CD8-positive, alpha-beta T cell (primary cell): ENCODE measurements at regions of chr12 and their contacts with region 1.

Region 1: DNA sequence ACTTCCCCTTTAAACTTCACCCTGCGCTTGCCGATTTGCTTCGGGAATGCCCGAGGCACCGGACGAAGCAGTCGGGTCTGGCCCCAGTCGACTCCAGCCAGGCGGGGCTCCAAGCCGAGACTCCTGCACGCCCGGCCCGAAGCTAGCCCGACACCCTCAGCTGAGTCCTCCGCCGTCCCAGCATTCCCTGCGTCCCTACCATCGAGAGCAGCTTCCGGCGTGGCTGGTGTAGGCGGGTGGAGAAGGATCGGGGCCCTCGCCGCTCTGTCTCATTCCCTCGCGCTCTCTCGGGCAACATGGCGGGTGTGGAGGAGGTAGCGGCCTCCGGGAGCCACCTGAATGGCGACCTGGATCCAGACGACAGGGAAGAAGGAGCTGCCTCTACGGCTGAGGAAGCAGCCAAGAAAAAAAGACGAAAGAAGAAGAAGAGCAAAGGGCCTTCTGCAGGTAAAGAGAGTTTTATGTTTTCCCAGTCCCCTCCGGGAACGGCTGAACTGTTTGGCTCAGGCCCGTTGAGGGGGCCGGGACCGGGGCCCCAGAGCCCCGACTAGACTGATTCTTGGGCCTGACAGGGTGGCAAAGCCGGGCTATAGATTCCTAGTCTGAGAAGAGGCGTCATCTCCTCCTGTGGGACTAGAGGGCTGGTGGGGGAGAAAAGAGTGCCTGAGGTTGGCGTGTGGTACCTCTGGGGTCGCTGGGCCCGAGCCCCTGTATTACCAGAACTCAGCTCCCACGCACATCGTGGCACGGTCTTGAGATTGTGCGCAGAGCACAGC is at the start of gene METAP2:
- DNase-seq: peak; percentile 73 to 94 (median 91)
- ATAC-seq: peak; percentile 97
- H3K4me3 ChIP-seq: peak within 1 kb of the TSS; percentile 77 to 88
- H3K4me3 Mint-ChIP-seq: peak within 1 kb of the TSS; percentile 99
- H3K27ac ChIP-seq: peak within 1 kb of the TSS; percentile 78 to 84
- H3K27ac Mint-ChIP-seq: peak within 1 kb of the TSS; percentile 98
- H3K4me1 ChIP-seq: peaks cover 29% of the 10 kb centered on the region
- H3K4me1 Mint-ChIP-seq: peaks cover 54% of the 10 kb centered on the region
- H3K27me3 ChIP-seq: no peaks in the 10 kb centered on the region
- H3K27me3 Mint-ChIP-seq: no peaks in the 10 kb centered on the region
- CTCF ChIP-seq: no peak
- total RNA-seq, gene METAP2: 68.3 to 69.9 TPM

Region 2: GRCh38 chr12:95072900-95073697 is 401.0 kb before region 1 on chr12 and contains the start of gene NR2C1:
- CTCF ChIA-PET with region 1: no interaction called
- POLR2A ChIA-PET with region 1: no interaction called
- intact Hi-C with region 1: loop called (anchors 1 to 2 kb)
- DNase-seq: peak; percentile 83 to 97 (median 91)
- ATAC-seq: peak; percentile 98
- H3K4me3 ChIP-seq: peak within 1 kb of the TSS; percentile 86 to 96
- H3K4me3 Mint-ChIP-seq: peak within 1 kb of the TSS; percentile 97
- H3K27ac ChIP-seq: peak within 1 kb of the TSS; percentile 71 to 74
- H3K27ac Mint-ChIP-seq: peak within 1 kb of the TSS; percentile 95
- H3K4me1 ChIP-seq: peaks cover 5% of the 10 kb centered on the region
- H3K4me1 Mint-ChIP-seq: peaks cover 26% of the 10 kb centered on the region
- H3K27me3 ChIP-seq: no peaks in the 10 kb centered on the region
- H3K27me3 Mint-ChIP-seq: no peaks in the 10 kb centered on the region
- CTCF ChIP-seq: no peak
- total RNA-seq, gene NR2C1: 40.7 to 49.2 TPM

Region 3: DNA sequence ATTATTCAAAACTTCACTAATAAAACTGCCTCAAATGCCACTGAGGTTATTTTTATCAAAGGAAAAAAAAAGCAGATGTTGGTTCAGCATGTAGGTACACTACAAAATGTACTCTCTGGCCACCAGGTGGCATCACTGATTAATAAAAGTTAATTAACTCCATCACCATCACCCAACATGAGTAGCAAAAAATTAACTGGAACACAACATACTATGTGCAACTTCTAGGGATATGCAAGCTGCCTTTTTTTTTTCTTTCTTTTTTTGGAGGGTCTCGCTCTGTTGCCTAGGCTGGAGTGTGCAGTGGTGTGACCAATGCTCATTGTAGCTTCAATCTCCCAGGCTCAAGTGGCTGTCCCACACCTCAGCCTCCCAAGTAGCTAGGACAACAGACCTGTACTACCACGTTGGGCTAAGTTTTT is 356.9 kb before region 1 on chr12:
- CTCF ChIA-PET with region 1: interaction called, 3 read pairs
- POLR2A ChIA-PET with region 1: no interaction called
- intact Hi-C with region 1: loop called in 1 of 2 experiments (anchors 5 kb)
- DNase-seq: peak; percentile 21 to 78 (median 67)
- ATAC-seq: peak; percentile 83
- H3K4me3 ChIP-seq: no peak overlapping the region
- H3K4me3 Mint-ChIP-seq: no peak overlapping the region
- H3K27ac ChIP-seq: no peak overlapping the region
- H3K27ac Mint-ChIP-seq: no peak overlapping the region
- H3K4me1 ChIP-seq: no peaks in the 10 kb centered on the region
- H3K4me1 Mint-ChIP-seq: no peaks in the 10 kb centered on the region
- H3K27me3 ChIP-seq: no peaks in the 10 kb centered on the region
- H3K27me3 Mint-ChIP-seq: no peaks in the 10 kb centered on the region
- CTCF ChIP-seq: peak; percentile 75

Region 4: DNA sequence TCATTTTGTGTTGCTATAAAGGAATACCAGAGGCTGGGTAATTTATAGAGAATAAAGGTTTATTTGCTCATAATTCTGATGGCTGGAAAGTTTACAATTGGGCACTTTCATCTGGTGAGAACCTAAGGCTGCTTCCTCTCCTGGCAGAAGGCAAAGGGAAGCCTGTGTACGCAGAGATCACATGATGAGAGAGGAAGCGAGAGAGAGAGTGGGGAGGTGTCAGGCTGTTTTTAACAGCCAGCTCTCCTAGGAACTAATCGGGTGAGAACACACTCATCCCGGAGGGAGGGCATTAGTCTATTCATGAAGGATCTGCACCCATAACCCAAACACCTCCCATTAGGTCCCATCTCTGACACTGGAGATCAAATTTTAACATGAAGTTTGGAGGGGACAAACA is 45.6 kb before region 1 on chr12:
- CTCF ChIA-PET with region 1: no interaction called
- POLR2A ChIA-PET with region 1: interaction called, 10 read pairs
- intact Hi-C with region 1: loop called in 1 of 2 experiments (anchors 5 kb)
- DNase-seq: peak in 5 of 9 experiments; percentile 5 to 60 (median 36)
- ATAC-seq: peak; percentile 73
- H3K4me3 ChIP-seq: peak overlapping the region; percentile 2 to 60
- H3K4me3 Mint-ChIP-seq: peak overlapping the region; percentile 60
- H3K27ac ChIP-seq: no peak overlapping the region
- H3K27ac Mint-ChIP-seq: peak overlapping the region; percentile 87
- H3K4me1 ChIP-seq: peaks cover 6% of the 10 kb centered on the region
- H3K4me1 Mint-ChIP-seq: peaks cover 11% of the 10 kb centered on the region
- H3K27me3 ChIP-seq: no peaks in the 10 kb centered on the region
- H3K27me3 Mint-ChIP-seq: peaks cover 2% of the 10 kb centered on the region
- CTCF ChIP-seq: no peak

Region 5: GRCh38 chr12:95548539-95549391 is 74.7 kb after region 1 on chr12:
- CTCF ChIA-PET with region 1: interaction called, 3 read pairs
- POLR2A ChIA-PET with region 1: interaction called, 5 read pairs
- intact Hi-C with region 1: loop called (anchors 2 to 5 kb)
- DNase-seq: peak; percentile 47 to 88 (median 71)
- ATAC-seq: peak; percentile 73
- H3K4me3 ChIP-seq: peak overlapping the region; percentile 65 to 81
- H3K4me3 Mint-ChIP-seq: peak overlapping the region; percentile 95
- H3K27ac ChIP-seq: peak overlapping the region; percentile 77 to 86
- H3K27ac Mint-ChIP-seq: peak overlapping the region; percentile 96
- H3K4me1 ChIP-seq: peaks cover 25% of the 10 kb centered on the region
- H3K4me1 Mint-ChIP-seq: peaks cover 57% of the 10 kb centered on the region
- H3K27me3 ChIP-seq: peaks cover 0 to 2% of the 10 kb centered on the region in 2 experiments
- H3K27me3 Mint-ChIP-seq: no peaks in the 10 kb centered on the region
- CTCF ChIP-seq: no peak

Region 6: DNA sequence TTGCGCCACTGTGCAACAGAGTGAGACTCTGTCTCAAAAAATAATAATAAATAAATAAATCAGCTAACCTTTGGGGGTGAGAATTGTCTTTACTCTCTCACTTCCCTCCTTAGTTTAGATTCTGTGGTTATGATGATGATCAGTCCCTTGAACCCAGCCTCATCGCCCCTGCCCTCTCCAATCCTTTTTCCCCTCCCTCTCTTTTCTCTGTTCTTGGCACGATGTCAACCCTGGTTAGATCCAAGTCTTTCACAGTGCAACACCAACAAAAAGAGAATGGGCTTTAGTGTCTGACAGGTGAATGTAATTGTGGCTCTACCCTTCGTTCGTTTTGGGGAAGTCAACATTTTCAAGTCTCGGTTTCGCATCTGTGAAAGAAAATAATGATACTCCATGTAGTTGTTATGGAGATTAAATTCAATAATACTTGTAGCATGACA is 257.5 kb after region 1 on chr12:
- CTCF ChIA-PET with region 1: no interaction called
- POLR2A ChIA-PET with region 1: no interaction called
- intact Hi-C with region 1: no loop called
- DNase-seq: no peak
- ATAC-seq: no peak
- H3K4me3 ChIP-seq: no peak overlapping the region
- H3K4me3 Mint-ChIP-seq: no peak overlapping the region
- H3K27ac ChIP-seq: no peak overlapping the region
- H3K27ac Mint-ChIP-seq: no peak overlapping the region
- H3K4me1 ChIP-seq: no peaks in the 10 kb centered on the region
- H3K4me1 Mint-ChIP-seq: no peaks in the 10 kb centered on the region
- H3K27me3 ChIP-seq: no peaks in the 10 kb centered on the region
- H3K27me3 Mint-ChIP-seq: peaks cover 7% of the 10 kb centered on the region
- CTCF ChIP-seq: no peak

Region 7: GRCh38 chr12:95858479-95859343 is 384.6 kb after region 1 on chr12 and contains the start of gene SNRPF:
- CTCF ChIA-PET with region 1: no interaction called
- POLR2A ChIA-PET with region 1: no interaction called
- intact Hi-C with region 1: loop called (anchors 5 kb)
- DNase-seq: peak; percentile 88 to 97 (median 92)
- ATAC-seq: peak; percentile 94
- H3K4me3 ChIP-seq: peak within 1 kb of the TSS; percentile 83 to 86
- H3K4me3 Mint-ChIP-seq: no peak within 1 kb of the TSS
- H3K27ac ChIP-seq: peak within 1 kb of the TSS; percentile 79 to 92
- H3K27ac Mint-ChIP-seq: no peak within 1 kb of the TSS
- H3K4me1 ChIP-seq: peaks cover 22% of the 10 kb centered on the region
- H3K4me1 Mint-ChIP-seq: peaks cover 21% of the 10 kb centered on the region
- H3K27me3 ChIP-seq: peaks cover 0 to 2% of the 10 kb centered on the region in 2 experiments
- H3K27me3 Mint-ChIP-seq: peaks cover 3% of the 10 kb centered on the region
- CTCF ChIP-seq: no peak
- total RNA-seq, gene SNRPF: 42.9 to 49.2 TPM

Region 8: DNA sequence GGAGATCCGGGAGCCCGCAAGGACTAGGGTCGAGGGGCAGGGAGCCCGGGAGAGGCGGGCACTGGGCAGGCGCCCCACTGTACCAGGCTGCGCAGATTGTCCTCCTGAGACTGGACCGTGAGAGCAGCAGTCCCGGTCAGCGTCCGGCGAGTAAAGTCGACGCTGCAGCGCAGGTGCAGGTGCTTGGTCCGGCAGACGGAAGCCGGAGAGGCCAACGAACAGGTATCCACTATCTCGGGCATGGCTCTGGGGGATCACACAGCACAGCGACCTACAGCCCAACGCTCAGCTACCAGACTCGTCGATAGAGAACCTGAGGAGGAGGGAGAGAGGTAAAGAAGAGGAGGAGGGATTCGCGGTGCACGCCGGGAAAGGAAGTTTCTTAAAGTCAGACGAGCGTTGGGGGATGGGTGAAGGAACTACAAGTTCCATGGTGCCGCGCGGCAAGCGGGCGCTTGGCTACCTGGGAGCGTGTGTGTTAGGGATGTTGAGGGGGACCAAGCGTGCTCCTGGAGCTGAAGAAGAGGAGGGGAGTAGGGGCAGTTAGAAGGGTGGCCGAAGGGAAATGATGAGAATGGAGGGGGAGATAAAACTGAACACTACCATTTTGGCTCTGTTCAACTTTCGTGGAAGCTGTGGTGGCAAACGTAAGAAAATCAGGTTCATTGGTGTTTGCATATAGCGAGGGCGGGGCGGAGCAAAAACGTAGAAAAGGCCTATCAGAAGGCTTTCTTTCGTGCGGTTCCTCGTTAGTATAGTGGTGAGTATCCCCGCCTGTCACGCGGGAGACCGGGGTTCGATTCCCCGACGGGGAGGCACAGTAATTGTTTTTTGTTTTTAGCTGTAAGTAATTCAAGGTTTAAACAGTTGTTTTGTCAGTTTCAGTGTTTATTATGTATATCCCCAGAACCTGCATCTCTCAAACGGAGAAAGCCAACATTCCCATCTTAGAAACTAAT is 561.5 kb after region 1 on chr12 and contains the start of gene LTA4H:
- CTCF ChIA-PET with region 1: no interaction called
- POLR2A ChIA-PET with region 1: no interaction called
- intact Hi-C with region 1: loop called in 1 of 2 experiments (anchors 1 kb)
- DNase-seq: peak; percentile 90 to 99 (median 97)
- ATAC-seq: peak; percentile 92
- H3K4me3 ChIP-seq: peak within 1 kb of the TSS; percentile 65 to 92
- H3K4me3 Mint-ChIP-seq: no peak within 1 kb of the TSS
- H3K27ac ChIP-seq: peak within 1 kb of the TSS; percentile 68 to 78
- H3K27ac Mint-ChIP-seq: no peak within 1 kb of the TSS
- H3K4me1 ChIP-seq: peaks cover 14% of the 10 kb centered on the region
- H3K4me1 Mint-ChIP-seq: peaks cover 12% of the 10 kb centered on the region
- H3K27me3 ChIP-seq: no peaks in the 10 kb centered on the region
- H3K27me3 Mint-ChIP-seq: no peaks in the 10 kb centered on the region
- CTCF ChIP-seq: no peak
- total RNA-seq, gene LTA4H: 38.4 to 42.9 TPM

Region 9: DNA sequence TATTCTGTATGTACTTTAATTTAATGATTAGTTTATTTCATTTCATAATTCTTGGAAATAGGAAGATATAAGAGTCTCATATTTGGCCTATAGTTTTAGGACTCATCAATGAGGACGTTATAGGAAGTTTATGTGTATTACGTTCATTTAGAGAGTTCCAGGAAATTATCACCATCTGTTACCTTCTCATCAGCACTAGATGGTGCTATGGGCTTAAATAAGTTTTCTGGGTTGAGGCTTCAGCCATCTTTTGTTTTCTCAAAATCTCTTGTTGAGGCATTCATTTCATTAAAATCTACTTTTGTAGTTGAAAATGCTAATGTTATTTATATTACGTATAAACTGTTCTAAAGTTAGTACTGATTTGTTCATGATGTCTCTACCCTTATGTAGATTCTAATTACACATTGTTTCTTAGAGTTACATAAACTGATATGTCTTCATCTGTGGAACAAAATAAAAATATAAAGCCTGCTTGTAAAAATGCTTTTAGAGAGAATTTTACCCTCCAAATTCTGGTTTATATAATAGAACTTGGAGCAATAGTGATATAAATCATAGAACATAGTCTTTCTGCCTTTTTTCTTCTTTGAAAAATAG is 1104.6 kb after region 1 on chr12:
- CTCF ChIA-PET with region 1: no interaction called
- POLR2A ChIA-PET with region 1: no interaction called
- intact Hi-C with region 1: no loop called
- DNase-seq: peak in 3 of 9 experiments; percentile 4 to 76 (median 68)
- ATAC-seq: peak; percentile 81
- H3K4me3 ChIP-seq: no peak overlapping the region
- H3K4me3 Mint-ChIP-seq: no peak overlapping the region
- H3K27ac ChIP-seq: no peak overlapping the region
- H3K27ac Mint-ChIP-seq: no peak overlapping the region
- H3K4me1 ChIP-seq: no peaks in the 10 kb centered on the region
- H3K4me1 Mint-ChIP-seq: no peaks in the 10 kb centered on the region
- H3K27me3 ChIP-seq: no peaks in the 10 kb centered on the region
- H3K27me3 Mint-ChIP-seq: peaks cover 5% of the 10 kb centered on the region
- CTCF ChIP-seq: peak; percentile 80